K562 (cell line): ENCODE measurements at regions of chr18 and their contacts with region 1.

Region 1: GRCh38 chr18:45722899-45723298 is 1.1 kb upstream of the SLC14A1 start:
- DNase-seq: peak; percentile 87 to 88 (median 88)
- ATAC-seq: peak; percentile 98
- H3K4me3 ChIP-seq: no peak overlapping the region
- H3K27ac ChIP-seq: no peak overlapping the region
- H3K4me1 ChIP-seq: peaks cover 0 to 8% of the 10 kb centered on the region in 2 experiments; a peak in 2 of 5 replicates
- H3K27me3 ChIP-seq: peaks cover 9 to 21% of the 10 kb centered on the region in 2 experiments; a peak in 4 of 5 replicates
- CTCF ChIP-seq: peak; percentile 71 to 83 (median 77)
- EP300 ChIP-seq: peak; percentile 85
- POLR2A ChIP-seq: no peak
- RAD21 ChIP-seq: peak; percentile 71

Region 2: DNA sequence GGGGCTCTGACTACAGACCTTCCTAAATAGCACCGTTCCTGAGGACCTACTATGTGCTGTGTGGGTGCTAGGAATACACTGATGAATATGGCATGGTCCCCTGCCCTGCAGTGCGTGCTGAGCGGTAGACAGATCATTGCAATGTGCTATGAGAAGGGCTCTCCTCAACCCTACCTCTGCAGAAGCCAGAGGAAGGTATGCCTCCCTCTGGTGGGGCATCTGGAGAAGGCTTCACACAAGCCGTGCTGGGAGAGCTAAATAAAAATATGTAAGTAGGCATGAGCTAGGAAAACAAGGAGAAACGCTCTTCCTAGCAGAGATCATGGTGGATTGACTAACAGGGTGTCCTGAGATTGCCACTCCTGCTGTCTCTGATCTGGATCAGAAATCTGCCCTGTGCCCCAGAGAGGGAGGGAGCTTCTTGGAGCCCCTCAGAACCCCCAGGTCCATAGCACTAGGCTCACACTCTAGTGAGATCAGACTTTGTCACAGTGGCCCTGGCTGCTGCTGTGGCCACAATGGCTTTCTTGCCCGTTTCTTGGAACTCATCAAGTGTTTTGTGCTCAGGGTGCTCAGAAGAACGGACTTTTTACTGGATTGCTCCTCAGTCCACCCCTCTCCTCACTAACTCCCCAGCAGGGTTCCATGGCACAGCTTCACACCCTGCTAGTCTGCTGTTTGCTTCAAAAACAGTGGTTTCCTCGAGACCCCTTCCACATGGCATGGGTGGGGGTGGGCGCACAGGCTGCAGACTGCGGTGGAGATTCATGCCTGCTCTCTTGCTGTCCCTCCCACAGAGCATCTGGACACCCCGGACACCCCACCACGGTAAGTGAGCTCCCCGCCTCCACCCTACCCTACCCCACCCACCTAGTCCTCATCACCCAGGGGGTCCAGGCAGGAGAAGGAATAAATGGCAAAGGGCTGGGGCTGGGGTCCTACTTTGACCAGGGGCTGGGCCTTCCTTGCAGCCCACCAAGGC is 116.8 kb after region 1 on chr18:
- CTCF ChIA-PET with region 1: interaction called, 3 read pairs
- POLR2A ChIA-PET with region 1: no interaction called
- in situ Hi-C with region 1: no loop called
- intact Hi-C with region 1: loop called (anchors 10 kb)
- DNase-seq: peak in 2 of 4 experiments; percentile 13 to 25
- ATAC-seq: peak; percentile 79
- H3K4me3 ChIP-seq: no peak overlapping the region
- H3K27ac ChIP-seq: no peak overlapping the region
- H3K4me1 ChIP-seq: peaks cover 3% of the 10 kb centered on the region in 2 experiments; a peak in 4 of 5 replicates
- H3K27me3 ChIP-seq: peaks cover 0 to 5% of the 10 kb centered on the region in 2 experiments; a peak in 2 of 5 replicates
- CTCF ChIP-seq: peak; percentile 29 to 52 (median 35); a peak in 3 of 6 replicates
- EP300 ChIP-seq: no peak
- POLR2A ChIP-seq: no peak
- RAD21 ChIP-seq: peak; percentile 42 to 50

Region 3: GRCh38 chr18:45879681-45880655 is 157.1 kb after region 1 on chr18:
- CTCF ChIA-PET with region 1: interaction called, 3 read pairs
- POLR2A ChIA-PET with region 1: interaction called, 3 read pairs
- in situ Hi-C with region 1: no loop called
- intact Hi-C with region 1: loop called (anchors 1 kb)
- DNase-seq: peak; percentile 63 to 70 (median 66)
- ATAC-seq: peak; percentile 99
- H3K4me3 ChIP-seq: no peak overlapping the region
- H3K27ac ChIP-seq: no peak overlapping the region
- H3K4me1 ChIP-seq: peaks cover 0 to 2% of the 10 kb centered on the region in 2 experiments; a peak in 1 of 5 replicates
- H3K27me3 ChIP-seq: no peaks in the 10 kb centered on the region
- CTCF ChIP-seq: peak; percentile 83 to 91 (median 84)
- EP300 ChIP-seq: no peak
- POLR2A ChIP-seq: no peak
- RAD21 ChIP-seq: peak; percentile 77 to 78